H1 (cell line): ENCODE measurements at regions of chr1 and their contacts with region 1.

Region 1: GRCh38 chr1:183281553-183282091 is 95.6 kb downstream of the LAMC2 start:
- DNase-seq: peak; percentile 91 to 96
- H3K4me3 ChIP-seq: no peak overlapping the region
- H3K27ac ChIP-seq: no peak overlapping the region
- H3K4me1 ChIP-seq: peaks cover 14 to 23% (median 18%) of the 10 kb centered on the region in 4 experiments
- H3K27me3 ChIP-seq: no peaks in the 10 kb centered on the region
- CTCF ChIP-seq: peak; percentile 81 to 94 (median 93)
- EP300 ChIP-seq: no peak
- POLR2A ChIP-seq: no peak
- RAD21 ChIP-seq: peak; percentile 95 to 98

Region 2: GRCh38 chr1:183270541-183271141 is 11.0 kb before region 1 on chr1:
- CTCF ChIA-PET with region 1: interaction called, 53 read pairs
- POLR2A ChIA-PET with region 1: no interaction called
- DNase-seq: no peak
- H3K4me3 ChIP-seq: no peak overlapping the region
- H3K27ac ChIP-seq: no peak overlapping the region
- H3K4me1 ChIP-seq: no peaks in the 10 kb centered on the region; a peak in 1 of 7 replicates
- H3K27me3 ChIP-seq: no peaks in the 10 kb centered on the region
- CTCF ChIP-seq: no peak
- EP300 ChIP-seq: no peak
- POLR2A ChIP-seq: no peak
- RAD21 ChIP-seq: no peak

Region 3: DNA sequence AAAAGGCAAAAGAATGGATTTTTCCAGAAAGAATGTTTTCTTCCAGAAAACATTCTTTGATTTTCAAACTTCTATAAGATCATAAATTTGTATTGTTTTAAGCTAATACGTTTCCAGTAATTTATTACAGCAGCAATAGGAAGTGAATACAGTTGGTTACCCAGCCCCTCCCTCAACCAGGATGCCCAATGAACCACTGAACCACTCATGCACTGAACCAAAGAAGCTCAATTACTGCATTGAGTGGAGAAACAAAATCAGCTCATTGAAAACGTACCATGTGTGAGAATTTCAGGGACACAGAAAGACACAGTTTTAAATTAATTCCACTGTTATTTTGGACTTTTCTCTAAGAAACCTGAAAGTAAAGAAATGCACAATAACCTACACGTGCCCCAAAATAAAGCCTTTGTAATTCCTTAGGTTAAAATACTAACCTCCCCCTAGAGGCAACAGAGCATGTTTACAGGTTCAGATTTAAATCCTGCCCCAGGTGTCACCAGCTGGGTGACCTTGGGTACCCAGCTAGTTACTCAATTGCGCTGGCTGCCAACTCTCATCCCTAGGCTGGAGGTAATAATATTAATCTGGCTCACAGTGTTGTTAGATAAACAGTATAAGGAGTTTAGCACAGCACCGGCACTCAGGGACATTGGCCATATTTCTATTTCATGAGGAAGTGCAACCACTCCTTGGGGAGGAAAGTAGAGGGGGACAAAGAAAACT is 24.9 kb after region 1 on chr1:
- CTCF ChIA-PET with region 1: interaction called, 59 read pairs
- POLR2A ChIA-PET with region 1: no interaction called
- DNase-seq: no peak
- H3K4me3 ChIP-seq: no peak overlapping the region
- H3K27ac ChIP-seq: no peak overlapping the region
- H3K4me1 ChIP-seq: peaks cover 3 to 22% (median 16%) of the 10 kb centered on the region in 4 experiments
- H3K27me3 ChIP-seq: no peaks in the 10 kb centered on the region
- CTCF ChIP-seq: peak in 2 of 3 experiments; percentile 47 to 63; a peak in 3 of 4 replicates
- EP300 ChIP-seq: no peak
- POLR2A ChIP-seq: no peak
- RAD21 ChIP-seq: peak; percentile 18 to 44; a peak in 3 of 4 replicates

Region 4: DNA sequence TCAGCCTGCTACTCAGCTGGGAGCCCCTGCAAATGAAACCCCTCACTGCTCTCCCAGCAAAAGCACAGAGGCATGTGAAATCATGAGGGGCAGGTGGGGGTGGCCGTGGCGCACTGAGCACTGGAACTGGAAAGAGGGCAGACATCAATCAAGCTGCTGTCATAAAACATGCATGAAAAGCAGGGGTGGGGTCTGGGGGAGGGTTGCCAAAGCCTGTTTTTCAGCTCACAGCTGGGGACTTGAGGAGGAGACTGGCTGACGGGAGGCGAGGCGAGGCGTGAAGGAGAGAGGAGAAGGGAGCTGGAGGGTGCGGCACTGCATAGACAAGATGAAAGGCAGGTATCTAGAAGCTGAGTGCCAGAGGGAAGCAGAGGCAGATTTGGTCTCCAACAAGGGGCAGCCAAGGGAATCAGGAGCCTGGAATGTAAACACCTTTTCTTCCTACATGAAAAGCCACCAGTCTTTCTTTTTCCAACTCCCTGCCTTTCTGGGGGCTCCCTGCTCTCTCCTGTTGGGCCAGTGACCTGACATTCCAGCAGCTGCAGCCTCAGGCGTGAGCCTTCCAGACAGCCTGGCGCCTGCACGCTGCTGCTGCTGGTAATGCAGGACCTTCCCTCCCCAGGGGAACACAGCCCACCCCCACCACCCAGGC is 49.6 kb after region 1 on chr1:
- CTCF ChIA-PET with region 1: interaction called, 20 read pairs
- POLR2A ChIA-PET with region 1: no interaction called
- DNase-seq: peak in 1 of 2 experiments; percentile 66
- H3K4me3 ChIP-seq: peak overlapping the region in 1 of 4 experiments; percentile 15; a peak in 1 of 8 replicates
- H3K27ac ChIP-seq: no peak overlapping the region
- H3K4me1 ChIP-seq: peaks cover 0 to 20% (median 16%) of the 10 kb centered on the region in 4 experiments; a peak in 6 of 7 replicates
- H3K27me3 ChIP-seq: no peaks in the 10 kb centered on the region
- CTCF ChIP-seq: peak in 2 of 3 experiments; percentile 33 to 56; a peak in 3 of 4 replicates
- EP300 ChIP-seq: no peak
- POLR2A ChIP-seq: no peak
- RAD21 ChIP-seq: peak in 1 of 2 experiments; percentile 32; a peak in 1 of 4 replicates

Region 5: GRCh38 chr1:183432548-183432875 is 150.9 kb after region 1 on chr1:
- CTCF ChIA-PET with region 1: no interaction called
- POLR2A ChIA-PET with region 1: no interaction called
- DNase-seq: no peak
- H3K4me3 ChIP-seq: no peak overlapping the region
- H3K27ac ChIP-seq: no peak overlapping the region
- H3K4me1 ChIP-seq: peaks cover 0 to 2% (median 0%) of the 10 kb centered on the region in 4 experiments; a peak in 2 of 7 replicates
- H3K27me3 ChIP-seq: no peaks in the 10 kb centered on the region
- CTCF ChIP-seq: no peak
- EP300 ChIP-seq: no peak
- POLR2A ChIP-seq: no peak
- RAD21 ChIP-seq: no peak

Region 6: GRCh38 chr1:183472488-183473216 is 191.0 kb after region 1 on chr1 and contains the start of gene SMG7:
- CTCF ChIA-PET with region 1: interaction called, 12 read pairs
- POLR2A ChIA-PET with region 1: no interaction called
- DNase-seq: no peak
- H3K4me3 ChIP-seq: peak within 1 kb of the TSS; percentile 89 to 91 (median 90)
- H3K27ac ChIP-seq: peak within 1 kb of the TSS; percentile 99
- H3K4me1 ChIP-seq: peaks cover 0 to 2% (median 1%) of the 10 kb centered on the region in 4 experiments; a peak in 2 of 7 replicates
- H3K27me3 ChIP-seq: no peaks in the 10 kb centered on the region
- CTCF ChIP-seq: no peak
- EP300 ChIP-seq: no peak
- POLR2A ChIP-seq: peak in 1 of 2 experiments; percentile 57; a peak in 1 of 3 replicates
- RAD21 ChIP-seq: peak in 1 of 2 experiments; percentile 3; a peak in 1 of 4 replicates
- total RNA-seq, gene SMG7: 61.2 and 65.6 TPM in 2 replicates